ENCODE measurements at regions of chr17 and their contacts with region 1.

Region 1: GRCh38 chr17:30824356-30825145 is at the start of gene CRLF3:
- DNase-seq: peak; percentile 87 to 93 (median 92)
- H3K4me3 ChIP-seq: peak within 1 kb of the TSS; percentile 90 to 92
- H3K4me3 Mint-ChIP-seq: peak within 1 kb of the TSS; percentile 93 to 100 (median 96)
- H3K27ac ChIP-seq: peak within 1 kb of the TSS; percentile 83
- H3K27ac Mint-ChIP-seq: peak within 1 kb of the TSS; percentile 81 to 97 (median 94)
- H3K4me1 ChIP-seq: peaks cover 44% of the 10 kb centered on the region
- H3K4me1 Mint-ChIP-seq: peaks cover 26 to 45% (median 34%) of the 10 kb centered on the region in 4 donors
- H3K27me3 ChIP-seq: no peaks in the 10 kb centered on the region
- H3K27me3 Mint-ChIP-seq: no peaks in the 10 kb centered on the region
- total RNA-seq, gene CRLF3: 92.7 to 95.0 TPM

Region 2: DNA sequence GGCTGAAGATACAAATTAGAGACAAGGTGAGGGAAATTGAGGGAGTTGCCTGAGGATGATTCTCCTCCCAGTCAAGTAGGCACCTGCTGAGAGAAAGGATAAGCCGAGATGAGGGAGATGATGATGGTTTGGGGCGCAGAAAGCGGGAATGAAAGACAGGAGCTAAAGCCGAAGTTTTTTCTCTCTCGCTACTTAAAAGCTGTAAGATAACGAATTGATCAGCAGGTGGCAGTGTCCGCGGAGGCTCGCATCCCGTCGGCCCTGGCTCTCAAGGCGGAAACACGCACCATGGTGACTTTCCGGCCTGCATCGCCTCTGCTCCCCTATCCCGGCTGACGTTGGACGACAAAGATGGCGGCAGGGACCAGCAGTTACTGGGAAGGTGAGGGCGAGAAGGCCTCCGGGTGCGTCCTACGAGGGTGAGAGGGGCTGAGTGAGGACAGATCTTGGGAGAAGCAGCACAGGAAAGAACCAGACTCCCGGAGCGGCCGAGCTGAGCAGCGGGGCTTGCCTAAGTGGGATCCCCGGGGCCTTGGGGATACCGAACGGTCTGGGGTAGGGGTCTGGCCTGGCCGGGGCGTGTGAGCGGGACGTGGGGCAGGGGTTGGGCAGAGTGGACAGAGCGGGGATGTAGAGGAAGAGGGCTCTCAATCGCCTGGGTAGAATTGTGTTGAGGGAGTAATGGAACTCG is 347.3 kb before region 1 on chr17 and contains the start of gene GOSR1:
- CTCF ChIA-PET with region 1: interaction called, 8 read pairs
- POLR2A ChIA-PET with region 1: interaction called, 6 read pairs
- intact Hi-C with region 1: loop called (anchors 1 kb)
- DNase-seq: peak; percentile 87 to 94 (median 90)
- H3K4me3 ChIP-seq: peak within 1 kb of the TSS; percentile 77 to 94
- H3K4me3 Mint-ChIP-seq: peak within 1 kb of the TSS; percentile 92 to 99 (median 97)
- H3K27ac ChIP-seq: peak within 1 kb of the TSS; percentile 99
- H3K27ac Mint-ChIP-seq: peak within 1 kb of the TSS; percentile 94 to 100 (median 98)
- H3K4me1 ChIP-seq: peaks cover 20% of the 10 kb centered on the region
- H3K4me1 Mint-ChIP-seq: peaks cover 20 to 45% (median 37%) of the 10 kb centered on the region in 4 donors
- H3K27me3 ChIP-seq: peaks cover 4% of the 10 kb centered on the region
- H3K27me3 Mint-ChIP-seq: peaks cover 0 to 2% of the 10 kb centered on the region in 2 donors
- total RNA-seq, gene GOSR1: 59.5 to 64.5 TPM

Region 3: GRCh38 chr17:30788918-30789317 is 35.6 kb before region 1 on chr17:
- CTCF ChIA-PET with region 1: interaction called, 9 read pairs
- POLR2A ChIA-PET with region 1: interaction called, 7 read pairs
- intact Hi-C with region 1: loop called (anchors 5 kb)
- DNase-seq: no peak
- H3K4me3 ChIP-seq: no peak overlapping the region
- H3K4me3 Mint-ChIP-seq: no peak overlapping the region
- H3K27ac ChIP-seq: no peak overlapping the region
- H3K27ac Mint-ChIP-seq: peak overlapping the region in 3 of 7 donors; percentile 1 to 81 (median 57)
- H3K4me1 ChIP-seq: peaks cover 13% of the 10 kb centered on the region
- H3K4me1 Mint-ChIP-seq: peaks cover 6 to 17% (median 11%) of the 10 kb centered on the region in 4 donors
- H3K27me3 ChIP-seq: no peaks in the 10 kb centered on the region
- H3K27me3 Mint-ChIP-seq: no peaks in the 10 kb centered on the region

Region 4: DNA sequence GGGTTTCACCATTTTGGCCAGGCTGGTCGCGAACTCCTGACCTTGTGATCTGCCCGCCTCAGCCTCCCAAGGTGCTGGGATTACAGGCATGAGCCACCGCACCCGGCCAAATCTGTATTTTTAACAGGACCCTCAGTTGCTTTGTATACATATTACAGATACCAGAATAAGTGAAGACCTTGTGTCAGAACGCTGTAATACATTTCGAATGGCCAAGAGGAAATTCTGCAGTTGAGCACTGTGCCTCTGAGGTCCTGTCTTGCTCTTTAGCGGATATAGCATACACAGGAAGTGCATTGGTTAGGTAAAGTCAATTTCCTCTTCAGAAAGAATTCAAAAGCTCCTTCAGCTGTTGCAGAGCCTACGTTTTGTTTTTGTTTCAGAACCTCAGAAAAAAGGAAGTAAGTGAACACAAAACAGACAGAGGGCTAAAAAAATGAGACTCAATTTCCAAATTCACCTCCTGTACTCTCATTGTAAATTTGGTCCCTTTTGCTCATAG is 15.7 kb before region 1 on chr17:
- CTCF ChIA-PET with region 1: interaction called, 271 read pairs
- POLR2A ChIA-PET with region 1: interaction called, 317 read pairs
- intact Hi-C with region 1: loop called (anchors 1 kb)
- DNase-seq: peak; percentile 67 to 82 (median 75)
- H3K4me3 ChIP-seq: peak overlapping the region in 1 of 2 donors; percentile 34
- H3K4me3 Mint-ChIP-seq: peak overlapping the region; percentile 82 to 92 (median 86)
- H3K27ac ChIP-seq: peak overlapping the region; percentile 52
- H3K27ac Mint-ChIP-seq: peak overlapping the region; percentile 92 to 96 (median 95)
- H3K4me1 ChIP-seq: peaks cover 86% of the 10 kb centered on the region
- H3K4me1 Mint-ChIP-seq: peaks cover 48 to 79% (median 63%) of the 10 kb centered on the region in 4 donors
- H3K27me3 ChIP-seq: no peaks in the 10 kb centered on the region
- H3K27me3 Mint-ChIP-seq: no peaks in the 10 kb centered on the region

Region 5: GRCh38 chr17:31321481-31321880 is 496.9 kb after region 1 on chr17 and contains the start of gene EVI2A:
- CTCF ChIA-PET with region 1: no interaction called
- POLR2A ChIA-PET with region 1: no interaction called
- intact Hi-C with region 1: loop called (anchors 5 kb)
- DNase-seq: peak; percentile 83 to 96 (median 88)
- H3K4me3 ChIP-seq: peak within 1 kb of the TSS; percentile 87 to 92
- H3K4me3 Mint-ChIP-seq: peak within 1 kb of the TSS; percentile 80 to 95 (median 90)
- H3K27ac ChIP-seq: peak within 1 kb of the TSS; percentile 73
- H3K27ac Mint-ChIP-seq: peak within 1 kb of the TSS; percentile 91 to 98 (median 95)
- H3K4me1 ChIP-seq: peaks cover 24% of the 10 kb centered on the region
- H3K4me1 Mint-ChIP-seq: peaks cover 19 to 45% (median 26%) of the 10 kb centered on the region in 4 donors
- H3K27me3 ChIP-seq: no peaks in the 10 kb centered on the region
- H3K27me3 Mint-ChIP-seq: no peaks in the 10 kb centered on the region
- total RNA-seq, gene EVI2A: 133 to 139 TPM